Activated naive CD4-positive, alpha-beta T cell treated with anti-CD3 and anti-CD28 coated beads for 36 hours (primary cell): ENCODE measurements at regions of chr2 and their contacts with region 1.

Region 1: GRCh38 chr2:57906152-57906732 is 140.4 kb upstream of the VRK2 start:
- DNase-seq: no peak
- H3K4me3 Mint-ChIP-seq: no peak overlapping the region
- H3K27ac Mint-ChIP-seq: no peak overlapping the region
- H3K4me1 Mint-ChIP-seq: peaks cover 9% of the 10 kb centered on the region
- H3K27me3 Mint-ChIP-seq: peaks cover 2% of the 10 kb centered on the region

Region 2: DNA sequence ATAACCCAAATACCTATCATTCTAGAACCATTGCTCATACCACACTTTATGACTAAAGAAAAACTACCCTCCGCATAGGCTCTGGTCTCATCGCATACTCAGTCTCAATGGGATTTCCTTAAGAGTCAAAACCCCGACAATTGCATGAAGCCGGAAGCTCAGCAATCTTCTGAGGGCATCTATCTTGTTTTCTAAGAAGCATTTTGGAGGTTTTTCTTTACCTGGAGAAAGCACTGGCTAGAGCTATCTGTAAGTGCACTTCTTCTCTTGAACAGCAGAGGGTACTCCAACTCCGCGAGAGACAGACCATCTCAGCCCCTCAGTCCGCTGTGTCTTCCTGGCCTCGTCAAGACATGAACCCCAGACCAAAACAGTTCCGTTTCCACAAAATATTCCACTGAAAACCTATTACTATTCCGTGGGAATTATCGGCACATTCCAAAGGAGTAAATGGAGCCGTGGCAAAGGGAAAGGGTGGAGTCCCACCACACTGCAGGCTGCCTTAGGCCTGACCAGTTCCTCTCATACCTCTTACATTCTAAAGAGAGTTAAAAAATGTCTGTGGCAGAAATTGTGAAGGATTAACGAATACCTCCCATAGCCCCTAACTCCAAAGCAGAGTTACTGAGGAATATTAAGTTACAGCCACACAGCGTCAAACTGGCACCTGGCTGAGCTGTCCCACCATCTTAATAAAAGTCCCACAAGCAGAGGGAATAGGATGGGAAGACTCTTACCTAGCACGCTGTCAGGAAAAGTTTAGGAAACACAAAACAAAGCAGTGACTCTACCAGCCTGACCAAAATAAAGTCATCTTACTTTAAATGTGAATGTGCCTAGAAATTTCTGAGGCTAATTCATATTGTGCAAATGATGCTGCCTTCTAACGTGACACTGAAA is 185.3 kb before region 1 on chr2:
- CTCF ChIA-PET with region 1: no interaction called
- intact Hi-C with region 1: loop called (anchors 2 kb)
- DNase-seq: peak; percentile 54
- H3K4me3 Mint-ChIP-seq: peak overlapping the region; percentile 39
- H3K27ac Mint-ChIP-seq: no peak overlapping the region
- H3K4me1 Mint-ChIP-seq: peaks cover 8% of the 10 kb centered on the region
- H3K27me3 Mint-ChIP-seq: peaks cover 5% of the 10 kb centered on the region

Region 3: DNA sequence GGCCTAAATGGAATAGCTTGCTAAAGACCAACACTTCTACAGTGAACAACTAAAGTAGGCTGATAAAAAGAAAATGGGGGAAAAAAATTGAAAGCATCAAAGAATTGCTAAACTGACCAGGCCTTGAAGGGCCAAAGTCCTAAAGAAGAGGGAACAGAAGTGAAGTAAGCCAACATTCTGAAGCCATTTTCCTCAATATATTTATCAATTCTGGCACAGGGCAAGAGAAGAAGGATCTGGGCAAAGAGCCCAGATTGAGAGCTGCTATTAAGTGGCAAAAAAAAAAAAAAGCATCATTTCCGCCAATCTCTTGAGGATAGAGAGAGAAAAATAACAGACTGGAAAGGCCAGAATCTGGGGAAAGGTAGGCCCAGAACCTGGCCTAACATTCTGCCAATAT is 309.2 kb after region 1 on chr2:
- CTCF ChIA-PET with region 1: no interaction called
- intact Hi-C with region 1: loop called (anchors 5 kb)
- DNase-seq: no peak
- H3K4me3 Mint-ChIP-seq: no peak overlapping the region
- H3K27ac Mint-ChIP-seq: no peak overlapping the region
- H3K4me1 Mint-ChIP-seq: no peaks in the 10 kb centered on the region
- H3K27me3 Mint-ChIP-seq: no peaks in the 10 kb centered on the region

Region 4: DNA sequence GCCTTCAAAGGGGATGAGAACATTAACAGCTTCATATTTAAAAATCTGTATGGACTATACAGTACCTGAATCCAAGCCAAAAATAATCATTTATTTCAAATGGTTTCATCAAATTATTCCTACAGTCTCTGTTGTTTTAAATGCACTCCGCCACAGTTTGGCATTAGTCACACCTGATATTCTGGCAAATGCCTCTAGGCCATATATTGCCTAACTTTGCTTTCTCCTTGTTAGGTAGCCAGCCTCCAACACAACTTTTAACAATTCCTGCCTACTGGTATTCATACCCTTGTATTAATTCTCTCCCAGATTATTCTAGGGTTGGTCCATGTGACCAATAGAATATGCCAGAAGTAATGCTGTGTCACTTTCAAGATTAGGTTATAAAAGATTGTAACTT is 481.5 kb after region 1 on chr2:
- CTCF ChIA-PET with region 1: no interaction called
- intact Hi-C with region 1: no loop called
- DNase-seq: no peak
- H3K4me3 Mint-ChIP-seq: no peak overlapping the region
- H3K27ac Mint-ChIP-seq: no peak overlapping the region
- H3K4me1 Mint-ChIP-seq: no peaks in the 10 kb centered on the region
- H3K27me3 Mint-ChIP-seq: peaks cover 3% of the 10 kb centered on the region

Region 5: GRCh38 chr2:58448065-58448507 is 541.8 kb after region 1 on chr2:
- CTCF ChIA-PET with region 1: interaction called, 12 read pairs
- intact Hi-C with region 1: loop called (anchors 1 kb)
- DNase-seq: peak; percentile 68
- H3K4me3 Mint-ChIP-seq: no peak overlapping the region
- H3K27ac Mint-ChIP-seq: no peak overlapping the region
- H3K4me1 Mint-ChIP-seq: no peaks in the 10 kb centered on the region
- H3K27me3 Mint-ChIP-seq: peaks cover 8% of the 10 kb centered on the region

Region 6: GRCh38 chr2:58680755-58681310 is 774.6 kb after region 1 on chr2:
- CTCF ChIA-PET with region 1: no interaction called
- intact Hi-C with region 1: loop called (anchors 2 kb)
- DNase-seq: no peak
- H3K4me3 Mint-ChIP-seq: no peak overlapping the region
- H3K27ac Mint-ChIP-seq: no peak overlapping the region
- H3K4me1 Mint-ChIP-seq: no peaks in the 10 kb centered on the region
- H3K27me3 Mint-ChIP-seq: peaks cover 2% of the 10 kb centered on the region

Region 7: GRCh38 chr2:58788402-58788801 is 882.2 kb after region 1 on chr2:
- CTCF ChIA-PET with region 1: no interaction called
- intact Hi-C with region 1: no loop called
- DNase-seq: no peak
- H3K4me3 Mint-ChIP-seq: no peak overlapping the region
- H3K27ac Mint-ChIP-seq: no peak overlapping the region
- H3K4me1 Mint-ChIP-seq: no peaks in the 10 kb centered on the region
- H3K27me3 Mint-ChIP-seq: peaks cover 5% of the 10 kb centered on the region